Activated CD4-positive, alpha-beta T cell treated with anti-CD3 and anti-CD28 coated beads, Interleukin-2, amount 10 ng/mL, durations not matched to agents 24 days and 14 days (primary cell): ENCODE measurements at regions of chr1 and their contacts with region 1.

Region 1: DNA sequence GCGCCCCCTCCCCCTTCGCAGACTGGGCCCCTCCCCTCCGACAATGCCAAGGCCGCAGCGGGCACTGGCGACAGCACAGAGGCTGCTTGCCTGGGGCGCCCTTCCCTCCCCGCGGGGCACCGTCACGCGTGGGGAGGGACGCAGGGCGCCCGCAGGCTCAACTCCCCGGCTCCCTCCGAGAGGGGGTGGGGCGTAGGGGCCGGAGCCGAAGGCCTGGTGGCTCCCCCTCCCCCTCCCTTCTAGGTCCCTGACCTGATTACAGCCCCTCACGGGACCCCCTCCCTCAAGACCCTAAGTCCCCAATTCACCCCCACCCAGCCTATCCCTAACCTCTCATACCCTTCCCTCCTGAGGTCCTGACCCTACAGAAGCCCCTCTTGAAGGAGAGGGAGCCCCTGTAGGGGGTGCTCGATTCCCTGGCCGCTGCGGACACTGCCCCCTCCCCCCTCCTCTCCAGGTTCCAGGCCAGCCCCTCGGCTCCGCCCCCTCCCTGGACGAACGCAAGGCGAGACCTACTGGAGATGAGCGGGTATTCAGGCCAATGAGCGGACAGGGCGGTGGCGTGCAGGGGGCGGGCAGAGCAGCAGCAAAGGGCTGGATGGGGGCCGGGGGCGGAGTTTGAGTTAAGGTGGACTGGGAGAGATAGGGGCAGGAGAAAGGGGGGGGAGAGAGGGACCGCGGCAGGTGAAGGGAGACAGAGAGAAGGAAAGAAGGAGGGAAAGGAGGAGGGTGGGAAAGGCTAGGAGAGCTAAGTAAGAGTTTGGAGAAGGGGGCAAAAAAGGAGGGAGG is 733 bp upstream of the ZBTB7B start:
- DNase-seq: peak; percentile 99
- H3K4me3 Mint-ChIP-seq: peak overlapping the region; percentile 99
- H3K27ac Mint-ChIP-seq: peak overlapping the region; percentile 98
- H3K4me1 Mint-ChIP-seq: peaks cover 58% of the 10 kb centered on the region
- H3K27me3 Mint-ChIP-seq: no peaks in the 10 kb centered on the region

Region 2: GRCh38 chr1:154747740-154748404 is 254.0 kb before region 1 on chr1:
- intact Hi-C with region 1: loop called (anchors 5 kb)
- DNase-seq: peak; percentile 91
- H3K4me3 Mint-ChIP-seq: peak overlapping the region; percentile 90
- H3K27ac Mint-ChIP-seq: peak overlapping the region; percentile 94
- H3K4me1 Mint-ChIP-seq: peaks cover 87% of the 10 kb centered on the region
- H3K27me3 Mint-ChIP-seq: peaks cover 2% of the 10 kb centered on the region

Region 3: GRCh38 chr1:154955718-154956543 is 45.9 kb before region 1 on chr1 and contains the start of gene PBXIP1:
- intact Hi-C with region 1: loop called (anchors 1 kb)
- DNase-seq: peak; percentile 97
- H3K4me3 Mint-ChIP-seq: peak within 1 kb of the TSS; percentile 87
- H3K27ac Mint-ChIP-seq: peak within 1 kb of the TSS; percentile 96
- H3K4me1 Mint-ChIP-seq: peaks cover 63% of the 10 kb centered on the region
- H3K27me3 Mint-ChIP-seq: no peaks in the 10 kb centered on the region
- total RNA-seq, gene PBXIP1: 19.3 and 21.6 TPM in 2 replicates

Region 4: GRCh38 chr1:154974063-154974807 is 27.6 kb before region 1 on chr1 and contains the start of gene CKS1B:
- intact Hi-C with region 1: loop called (anchors 1 kb)
- DNase-seq: peak; percentile 98
- H3K4me3 Mint-ChIP-seq: no peak within 1 kb of the TSS
- H3K27ac Mint-ChIP-seq: no peak within 1 kb of the TSS
- H3K4me1 Mint-ChIP-seq: peaks cover 39% of the 10 kb centered on the region
- H3K27me3 Mint-ChIP-seq: no peaks in the 10 kb centered on the region
- total RNA-seq, gene CKS1B: 179 and 181 TPM in 2 replicates

Region 5: GRCh38 chr1:155017041-155017945 is 15.4 kb after region 1 on chr1:
- intact Hi-C with region 1: loop called (anchors 1 kb)
- DNase-seq: peak; percentile 96
- H3K4me3 Mint-ChIP-seq: peak overlapping the region; percentile 78
- H3K27ac Mint-ChIP-seq: peak overlapping the region; percentile 37
- H3K4me1 Mint-ChIP-seq: peaks cover 52% of the 10 kb centered on the region
- H3K27me3 Mint-ChIP-seq: no peaks in the 10 kb centered on the region

Region 6: GRCh38 chr1:155084722-155085503 is 83.0 kb after region 1 on chr1:
- intact Hi-C with region 1: loop called (anchors 2 kb)
- DNase-seq: peak; percentile 98
- H3K4me3 Mint-ChIP-seq: peak overlapping the region; percentile 92
- H3K27ac Mint-ChIP-seq: peak overlapping the region; percentile 93
- H3K4me1 Mint-ChIP-seq: peaks cover 36% of the 10 kb centered on the region
- H3K27me3 Mint-ChIP-seq: peaks cover 28% of the 10 kb centered on the region

Region 7: GRCh38 chr1:155193275-155193990 is 191.6 kb after region 1 on chr1:
- intact Hi-C with region 1: loop called (anchors 5 kb)
- DNase-seq: peak; percentile 94
- H3K4me3 Mint-ChIP-seq: peak overlapping the region; percentile 97
- H3K27ac Mint-ChIP-seq: peak overlapping the region; percentile 100
- H3K4me1 Mint-ChIP-seq: peaks cover 34% of the 10 kb centered on the region
- H3K27me3 Mint-ChIP-seq: no peaks in the 10 kb centered on the region